MCF 10A (cell line): ENCODE measurements at regions of chr4 and their contacts with region 1.

Region 1: GRCh38 chr4:111136438-111136837 is 513.6 kb upstream of the PITX2 start:
- DNase-seq: peak; percentile 37
- H3K4me3 Mint-ChIP-seq: no peak overlapping the region
- H3K27ac Mint-ChIP-seq: no peak overlapping the region
- H3K4me1 Mint-ChIP-seq: no peaks in the 10 kb centered on the region
- H3K27me3 Mint-ChIP-seq: no peaks in the 10 kb centered on the region
- CTCF ChIP-seq: peak; percentile 34

Region 2: GRCh38 chr4:110865611-110866259 is 270.7 kb before region 1 on chr4:
- CTCF ChIA-PET with region 1: no interaction called
- POLR2A ChIA-PET with region 1: no interaction called
- intact Hi-C with region 1: no loop called
- DNase-seq: peak; percentile 36
- H3K4me3 Mint-ChIP-seq: no peak overlapping the region
- H3K27ac Mint-ChIP-seq: no peak overlapping the region
- H3K4me1 Mint-ChIP-seq: peaks cover 22% of the 10 kb centered on the region
- H3K27me3 Mint-ChIP-seq: peaks cover 4% of the 10 kb centered on the region
- CTCF ChIP-seq: no peak

Region 3: GRCh38 chr4:111283061-111283677 is 146.7 kb after region 1 on chr4:
- CTCF ChIA-PET with region 1: interaction called, 24 read pairs
- POLR2A ChIA-PET with region 1: no interaction called
- intact Hi-C with region 1: loop called (anchors 1 kb)
- DNase-seq: peak; percentile 77
- H3K4me3 Mint-ChIP-seq: no peak overlapping the region
- H3K27ac Mint-ChIP-seq: no peak overlapping the region
- H3K4me1 Mint-ChIP-seq: no peaks in the 10 kb centered on the region
- H3K27me3 Mint-ChIP-seq: peaks cover 48% of the 10 kb centered on the region
- CTCF ChIP-seq: peak; percentile 81

Region 4: DNA sequence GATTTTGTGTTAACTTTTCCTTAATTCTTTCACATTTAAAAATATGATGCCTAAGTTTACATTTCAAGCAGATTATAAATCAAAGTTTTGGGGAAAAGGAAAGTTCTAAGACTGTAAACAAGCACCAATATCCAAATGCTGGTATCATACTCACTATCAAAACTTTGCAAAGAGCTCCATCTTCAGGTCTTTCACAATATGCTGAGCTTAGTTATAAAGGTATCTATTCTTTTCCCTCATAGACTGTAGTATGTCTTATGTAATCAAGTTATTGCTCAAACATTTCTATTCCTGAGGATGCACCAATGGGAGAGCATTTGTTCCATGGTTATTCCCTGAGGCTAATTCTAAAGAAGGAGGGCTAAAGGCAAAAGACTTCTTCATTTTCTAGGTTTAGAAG is 800.9 kb after region 1 on chr4:
- CTCF ChIA-PET with region 1: no interaction called
- POLR2A ChIA-PET with region 1: no interaction called
- intact Hi-C with region 1: loop called (anchors 10 kb)
- DNase-seq: peak; percentile 69
- H3K4me3 Mint-ChIP-seq: no peak overlapping the region
- H3K27ac Mint-ChIP-seq: no peak overlapping the region
- H3K4me1 Mint-ChIP-seq: no peaks in the 10 kb centered on the region
- H3K27me3 Mint-ChIP-seq: peaks cover 55% of the 10 kb centered on the region
- CTCF ChIP-seq: peak; percentile 27